Activated CD4-positive, alpha-beta memory T cell treated with anti-CD3 and anti-CD28 coated beads, Interleukin-2, amount 10 ng/mL, durations not matched to agents 7 days and 5 days (primary cell): ENCODE measurements at regions of chr14 and their contacts with region 1.

Region 1: GRCh38 chr14:88824314-88825077 is at the start of gene TTC8:
- DNase-seq: peak; percentile 86
- H3K4me3 Mint-ChIP-seq: peak within 1 kb of the TSS; percentile 83
- H3K27ac Mint-ChIP-seq: peak within 1 kb of the TSS; percentile 89
- H3K4me1 Mint-ChIP-seq: peaks cover 14% of the 10 kb centered on the region
- H3K27me3 Mint-ChIP-seq: peaks cover 4% of the 10 kb centered on the region
- total RNA-seq, gene TTC8: 1.8 to 2.3 TPM

Region 2: GRCh38 chr14:88792572-88793258 is 31.8 kb before region 1 on chr14 and contains the start of gene EML5:
- CTCF ChIA-PET with region 1: interaction called, 9 read pairs
- POLR2A ChIA-PET with region 1: interaction called, 20 read pairs
- DNase-seq: peak; percentile 81
- H3K4me3 Mint-ChIP-seq: peak within 1 kb of the TSS; percentile 82
- H3K27ac Mint-ChIP-seq: peak within 1 kb of the TSS; percentile 40
- H3K4me1 Mint-ChIP-seq: peaks cover 21% of the 10 kb centered on the region
- H3K27me3 Mint-ChIP-seq: peaks cover 4% of the 10 kb centered on the region
- total RNA-seq, gene EML5: 2.4 to 2.9 TPM

Region 3: DNA sequence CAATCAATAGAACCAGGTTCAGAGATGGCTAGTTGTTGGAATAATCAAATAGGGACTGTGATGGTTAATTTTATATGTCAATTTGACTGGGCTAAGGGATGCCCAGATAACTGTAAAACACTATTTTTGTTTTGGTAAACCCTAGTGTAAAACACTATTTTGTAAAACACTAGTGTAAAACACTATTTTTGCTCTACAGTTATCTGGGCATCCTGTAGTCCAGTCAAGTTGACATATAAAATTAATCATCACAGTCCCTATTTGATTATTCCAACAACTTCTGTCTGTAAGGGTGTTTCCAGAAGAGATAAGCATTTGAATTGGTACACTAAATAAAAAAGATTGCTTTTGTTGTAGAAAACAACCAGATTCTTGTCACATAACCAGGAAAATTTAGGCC is 16.1 kb before region 1 on chr14:
- CTCF ChIA-PET with region 1: no interaction called
- POLR2A ChIA-PET with region 1: no interaction called
- DNase-seq: no peak
- H3K4me3 Mint-ChIP-seq: no peak overlapping the region
- H3K27ac Mint-ChIP-seq: no peak overlapping the region
- H3K4me1 Mint-ChIP-seq: no peaks in the 10 kb centered on the region
- H3K27me3 Mint-ChIP-seq: peaks cover 22% of the 10 kb centered on the region

Region 4: DNA sequence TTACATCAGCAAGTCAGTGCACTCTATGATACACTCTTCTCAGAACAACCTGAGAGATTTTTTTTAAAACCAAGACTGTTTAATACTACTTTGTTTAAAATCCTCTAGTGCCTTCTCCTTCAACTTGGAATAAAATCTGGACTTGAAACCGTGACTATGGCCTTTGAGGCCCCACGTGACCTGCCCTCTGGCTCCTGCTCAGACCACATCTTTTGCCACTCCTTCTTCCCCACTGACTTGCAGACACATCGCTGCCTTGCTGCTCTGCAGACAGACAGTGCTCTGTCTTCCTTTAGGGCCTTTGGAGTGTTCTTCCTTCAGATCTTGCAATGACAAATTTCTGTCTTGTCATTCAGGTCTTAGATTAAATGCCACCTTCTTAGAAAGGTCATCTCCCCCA is 48.5 kb after region 1 on chr14:
- CTCF ChIA-PET with region 1: no interaction called
- POLR2A ChIA-PET with region 1: no interaction called
- DNase-seq: no peak
- H3K4me3 Mint-ChIP-seq: no peak overlapping the region
- H3K27ac Mint-ChIP-seq: no peak overlapping the region
- H3K4me1 Mint-ChIP-seq: no peaks in the 10 kb centered on the region
- H3K27me3 Mint-ChIP-seq: no peaks in the 10 kb centered on the region

Region 5: DNA sequence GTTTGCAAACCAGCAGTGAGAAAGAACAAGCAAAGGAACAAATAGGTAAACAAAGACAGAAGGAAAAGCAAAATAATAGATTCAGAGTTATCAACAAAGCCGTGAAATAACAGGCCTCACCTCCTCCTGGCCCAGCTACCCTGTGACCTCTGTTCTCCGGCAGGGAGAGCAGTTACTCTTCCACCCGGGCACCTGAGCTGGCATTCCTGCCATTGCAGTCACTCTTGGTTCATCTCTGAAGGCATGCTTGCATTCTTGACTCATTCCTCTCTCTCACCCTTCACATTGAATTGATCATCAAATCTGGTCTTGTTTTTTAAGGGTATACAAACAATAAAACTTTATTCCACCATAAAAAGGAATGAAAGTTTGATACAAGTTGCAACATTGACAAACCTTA is 95.0 kb after region 1 on chr14:
- CTCF ChIA-PET with region 1: no interaction called
- POLR2A ChIA-PET with region 1: no interaction called
- DNase-seq: no peak
- H3K4me3 Mint-ChIP-seq: no peak overlapping the region
- H3K27ac Mint-ChIP-seq: no peak overlapping the region
- H3K4me1 Mint-ChIP-seq: no peaks in the 10 kb centered on the region
- H3K27me3 Mint-ChIP-seq: peaks cover 5% of the 10 kb centered on the region